Activated CD4-positive, alpha-beta memory T cell treated with anti-CD3 and anti-CD28 coated beads, Interleukin-2, amount 10 ng/mL, durations not matched to agents 7 days and 5 days (primary cell): ENCODE measurements at regions of chr9 and their contacts with region 1.

Region 1: DNA sequence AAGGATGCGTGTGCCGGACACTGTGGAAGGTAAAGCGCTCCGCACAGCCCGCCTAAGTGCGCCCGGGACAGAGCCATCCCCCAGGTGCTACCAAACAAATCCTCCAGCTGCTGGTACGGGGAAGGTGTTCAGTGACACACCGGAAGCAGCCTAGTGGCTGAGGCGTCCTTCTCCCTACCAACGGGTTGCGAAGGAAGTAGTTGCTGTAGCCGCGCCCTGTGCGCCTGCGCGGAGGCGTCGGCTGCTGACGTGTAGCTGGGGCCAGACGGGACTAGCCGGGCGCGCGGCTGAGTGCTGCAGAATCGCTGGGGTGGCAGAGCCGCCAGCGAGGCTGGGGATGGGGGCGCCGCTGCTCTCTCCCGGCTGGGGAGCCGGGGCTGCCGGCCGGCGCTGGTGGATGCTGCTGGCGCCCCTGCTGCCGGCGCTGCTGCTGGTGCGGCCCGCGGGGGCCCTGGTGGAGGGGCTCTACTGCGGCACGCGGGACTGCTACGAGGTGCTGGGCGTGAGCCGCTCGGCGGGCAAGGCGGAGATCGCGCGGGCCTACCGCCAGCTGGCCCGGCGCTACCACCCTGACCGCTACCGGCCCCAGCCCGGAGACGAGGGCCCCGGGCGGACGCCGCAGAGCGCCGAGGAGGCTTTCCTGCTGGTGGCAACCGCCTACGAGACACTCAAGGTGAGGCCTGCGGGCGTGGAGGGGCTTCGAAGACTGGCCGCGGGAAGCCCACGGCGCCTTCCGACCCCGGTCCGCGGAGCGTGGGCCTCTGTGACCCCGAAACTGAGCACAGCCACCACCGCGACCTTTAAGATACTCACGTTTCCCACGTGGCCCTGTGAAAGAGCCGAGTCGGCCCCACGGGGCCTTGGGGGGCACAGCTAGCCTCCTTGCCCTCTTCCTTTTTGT is at the start of gene DNAJC25:
- DNase-seq: peak; percentile 97
- H3K4me3 Mint-ChIP-seq: peak within 1 kb of the TSS; percentile 85
- H3K27ac Mint-ChIP-seq: peak within 1 kb of the TSS; percentile 75
- H3K4me1 Mint-ChIP-seq: peaks cover 38% of the 10 kb centered on the region
- H3K27me3 Mint-ChIP-seq: no peaks in the 10 kb centered on the region
- total RNA-seq, gene DNAJC25: 3.2 to 3.6 TPM

Region 2: DNA sequence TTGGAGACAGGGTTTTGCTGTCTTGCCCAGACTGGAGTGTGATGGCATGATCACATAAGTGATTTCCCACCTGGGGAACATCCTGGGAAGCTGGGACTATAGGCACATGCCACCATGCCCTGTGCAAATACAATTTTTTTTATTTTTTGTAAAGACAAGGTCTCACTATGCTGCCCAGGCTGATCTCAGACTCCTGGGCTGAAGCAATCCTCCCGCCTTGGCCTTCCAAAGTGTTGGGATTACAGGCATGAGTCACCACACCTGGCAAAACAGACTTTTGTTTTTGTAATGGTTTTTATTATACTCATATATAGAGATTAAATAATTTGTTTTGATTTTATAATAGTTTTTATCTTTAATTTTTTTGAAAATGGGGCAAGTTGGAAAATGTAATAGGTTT is 14.5 kb after region 1 on chr9:
- CTCF ChIA-PET with region 1: no interaction called
- POLR2A ChIA-PET with region 1: interaction called, 19 read pairs
- DNase-seq: no peak
- H3K4me3 Mint-ChIP-seq: no peak overlapping the region
- H3K27ac Mint-ChIP-seq: no peak overlapping the region
- H3K4me1 Mint-ChIP-seq: no peaks in the 10 kb centered on the region
- H3K27me3 Mint-ChIP-seq: no peaks in the 10 kb centered on the region

Region 3: GRCh38 chr9:111661150-111661801 is 30.0 kb after region 1 on chr9 and contains the start of gene GNG10:
- CTCF ChIA-PET with region 1: interaction called, 4 read pairs
- POLR2A ChIA-PET with region 1: interaction called, 35 read pairs
- DNase-seq: peak; percentile 71
- H3K4me3 Mint-ChIP-seq: peak within 1 kb of the TSS; percentile 98
- H3K27ac Mint-ChIP-seq: peak within 1 kb of the TSS; percentile 85
- H3K4me1 Mint-ChIP-seq: peaks cover 29% of the 10 kb centered on the region
- H3K27me3 Mint-ChIP-seq: no peaks in the 10 kb centered on the region
- total RNA-seq, gene GNG10: 22.2 to 23.8 TPM